ENCODE measurements at regions of chr4 and their contacts with region 1.

Region 1: DNA sequence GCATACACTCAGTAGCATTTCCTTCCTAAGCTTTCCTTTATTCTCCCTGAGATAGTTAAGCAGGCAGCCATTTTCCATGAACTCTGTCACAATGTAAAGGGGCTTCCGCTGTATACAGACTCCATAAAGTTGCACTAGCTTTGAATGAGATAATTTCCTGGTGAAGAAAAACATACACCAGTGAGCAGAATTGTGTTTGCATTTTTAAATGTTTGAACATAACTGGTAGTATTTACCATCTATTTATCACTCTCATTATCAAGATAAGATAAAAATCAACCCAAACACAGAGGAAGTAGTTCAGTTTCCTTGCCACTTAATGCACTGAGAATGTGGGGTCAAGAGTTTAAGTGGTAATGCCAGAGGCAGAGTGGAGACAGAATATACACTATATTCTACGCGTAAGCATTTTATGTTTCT is 54.1 kb downstream of the TXK start:
- DNase-seq: no peak
- ATAC-seq: no peak
- H3K4me3 ChIP-seq: no peak overlapping the region
- H3K27ac ChIP-seq: no peak overlapping the region
- H3K4me1 ChIP-seq: no peaks in the 10 kb centered on the region
- H3K27me3 ChIP-seq: no peaks in the 10 kb centered on the region
- CTCF ChIP-seq: no peak
- POLR2A ChIP-seq: no peak

Region 2: GRCh38 chr4:47926639-47927258 is 153.2 kb before region 1 on chr4:
- intact Hi-C with region 1: loop called in 8 of 10 experiments (anchors 5 to 10 kb)
- DNase-seq: peak in 4 of 5 donors; percentile 24 to 45 (median 32)
- ATAC-seq: peak; percentile 47 to 90 (median 81)
- H3K4me3 ChIP-seq: peak overlapping the region in 2 of 12 donors; percentile 14 to 16
- H3K27ac ChIP-seq: no peak overlapping the region
- H3K4me1 ChIP-seq: peaks cover 0 to 7% (median 0%) of the 10 kb centered on the region in 12 donors
- H3K27me3 ChIP-seq: peaks cover 0 to 11% (median 0%) of the 10 kb centered on the region in 9 donors
- CTCF ChIP-seq: peak; percentile 45 to 73 (median 56)
- POLR2A ChIP-seq: no peak